Breast epithelium (tissue), 4 donors: ENCODE measurements at regions of chr4 and their contacts with region 1.

Region 1: GRCh38 chr4:129550281-129550785 is 454.4 kb downstream of the C4orf33 start:
- DNase-seq: no peak
- H3K4me3 ChIP-seq: no peak overlapping the region
- H3K27ac ChIP-seq: no peak overlapping the region
- H3K4me1 ChIP-seq: no peaks in the 10 kb centered on the region
- H3K27me3 ChIP-seq: no peaks in the 10 kb centered on the region
- CTCF ChIP-seq: no peak
- POLR2A ChIP-seq: no peak

Region 2: DNA sequence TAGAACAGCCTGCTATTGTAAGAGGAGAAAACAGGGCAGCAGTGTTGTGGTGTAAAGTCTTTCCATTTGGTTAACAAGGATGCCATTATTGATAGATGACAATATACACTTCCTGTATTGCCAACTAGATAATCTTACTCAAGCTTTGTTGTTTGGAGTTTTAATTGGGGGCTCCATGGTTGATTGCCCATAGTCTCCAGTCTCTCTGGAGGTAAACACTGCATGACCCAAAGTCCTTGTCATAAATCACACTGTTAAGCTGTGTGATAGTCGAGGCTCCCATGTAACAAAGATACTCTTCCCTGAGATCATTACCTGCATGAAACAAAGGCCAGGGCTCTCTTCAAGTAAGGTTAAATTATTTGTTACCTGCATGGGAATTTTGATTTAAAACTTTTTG is 59.8 kb before region 1 on chr4:
- intact Hi-C with region 1: loop called (anchors 2 kb)
- DNase-seq: no peak
- H3K4me3 ChIP-seq: no peak overlapping the region
- H3K27ac ChIP-seq: no peak overlapping the region
- H3K4me1 ChIP-seq: no peaks in the 10 kb centered on the region
- H3K27me3 ChIP-seq: no peaks in the 10 kb centered on the region
- CTCF ChIP-seq: no peak
- POLR2A ChIP-seq: no peak